ENCODE measurements at regions of chr3 and their contacts with region 1.

Region 1: GRCh38 chr3:72375237-72376076 is 472.8 kb downstream of the SHQ1 start:
- DNase-seq: no peak
- H3K4me3 Mint-ChIP-seq: peak overlapping the region; percentile 32
- H3K27ac Mint-ChIP-seq: peak overlapping the region; percentile 92
- H3K4me1 Mint-ChIP-seq: peaks cover 48% of the 10 kb centered on the region
- H3K27me3 Mint-ChIP-seq: no peaks in the 10 kb centered on the region

Region 2: DNA sequence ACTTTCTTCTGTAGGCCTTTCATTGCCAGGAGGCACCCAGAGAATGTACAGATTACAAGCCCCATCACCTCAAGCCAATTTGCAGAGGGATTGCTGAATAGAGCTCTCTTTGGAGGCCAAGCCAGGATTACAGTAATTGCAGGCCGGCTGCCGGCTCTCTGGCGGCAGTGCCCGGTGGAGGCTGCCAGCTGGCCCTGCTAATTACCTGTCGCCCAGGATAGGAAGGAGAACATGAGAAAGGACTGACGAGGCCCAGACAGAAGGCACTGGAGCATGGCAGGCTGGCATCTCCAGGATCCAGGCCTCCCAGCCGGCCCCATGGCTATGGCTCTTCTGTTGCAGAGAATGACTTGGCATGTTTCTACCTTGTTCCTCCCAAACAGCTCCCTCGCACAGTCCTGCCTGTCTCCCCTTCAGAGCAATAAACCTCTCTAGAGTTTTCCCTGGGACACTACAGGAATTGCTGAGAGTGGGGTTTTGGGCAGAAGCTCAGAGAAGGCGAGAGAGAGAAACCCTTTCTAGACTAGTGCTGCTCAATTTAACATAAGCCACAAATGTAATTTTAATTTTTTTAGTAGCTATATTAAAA is 316.9 kb before region 1 on chr3:
- intact Hi-C with region 1: no loop called
- DNase-seq: no peak
- H3K4me3 Mint-ChIP-seq: no peak overlapping the region
- H3K27ac Mint-ChIP-seq: no peak overlapping the region
- H3K4me1 Mint-ChIP-seq: peaks cover 17% of the 10 kb centered on the region
- H3K27me3 Mint-ChIP-seq: no peaks in the 10 kb centered on the region

Region 3: DNA sequence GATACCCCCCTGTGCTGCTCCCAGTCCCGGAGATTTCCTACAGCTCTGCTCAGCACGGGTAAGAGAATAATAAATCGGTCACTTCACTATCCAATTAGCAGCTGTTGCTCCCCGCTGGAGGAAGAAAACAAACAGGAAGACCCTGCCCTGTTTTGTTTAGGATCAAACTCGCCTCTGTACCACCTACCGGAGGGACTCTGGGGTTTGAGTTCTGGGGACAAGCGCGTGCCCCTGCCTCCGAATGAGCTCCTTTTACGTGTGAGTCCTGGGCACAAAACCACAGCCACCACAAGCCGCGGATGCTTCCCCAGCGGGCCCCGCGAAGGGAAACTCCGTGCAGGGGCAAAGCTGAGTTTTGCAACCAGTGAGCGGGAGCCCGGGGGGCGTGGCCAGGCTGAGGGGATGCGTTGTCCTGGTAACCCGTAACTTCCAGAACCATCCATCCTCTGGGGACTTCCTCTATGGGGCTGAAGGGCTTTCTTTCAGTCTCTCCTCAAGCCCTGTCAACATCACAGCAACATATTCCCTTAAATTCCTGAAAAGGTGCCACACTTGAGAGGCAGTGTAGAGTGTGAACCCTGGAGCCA is 274.8 kb before region 1 on chr3:
- intact Hi-C with region 1: loop called (anchors 1 kb)
- DNase-seq: peak; percentile 95
- H3K4me3 Mint-ChIP-seq: peak overlapping the region; percentile 78
- H3K27ac Mint-ChIP-seq: peak overlapping the region; percentile 88
- H3K4me1 Mint-ChIP-seq: peaks cover 32% of the 10 kb centered on the region
- H3K27me3 Mint-ChIP-seq: peaks cover 5% of the 10 kb centered on the region

Region 4: GRCh38 chr3:72413228-72413627 is 37.8 kb after region 1 on chr3:
- intact Hi-C with region 1: loop called (anchors 1 kb)
- DNase-seq: no peak
- H3K4me3 Mint-ChIP-seq: no peak overlapping the region
- H3K27ac Mint-ChIP-seq: peak overlapping the region; percentile 52
- H3K4me1 Mint-ChIP-seq: peaks cover 76% of the 10 kb centered on the region
- H3K27me3 Mint-ChIP-seq: no peaks in the 10 kb centered on the region

Region 5: DNA sequence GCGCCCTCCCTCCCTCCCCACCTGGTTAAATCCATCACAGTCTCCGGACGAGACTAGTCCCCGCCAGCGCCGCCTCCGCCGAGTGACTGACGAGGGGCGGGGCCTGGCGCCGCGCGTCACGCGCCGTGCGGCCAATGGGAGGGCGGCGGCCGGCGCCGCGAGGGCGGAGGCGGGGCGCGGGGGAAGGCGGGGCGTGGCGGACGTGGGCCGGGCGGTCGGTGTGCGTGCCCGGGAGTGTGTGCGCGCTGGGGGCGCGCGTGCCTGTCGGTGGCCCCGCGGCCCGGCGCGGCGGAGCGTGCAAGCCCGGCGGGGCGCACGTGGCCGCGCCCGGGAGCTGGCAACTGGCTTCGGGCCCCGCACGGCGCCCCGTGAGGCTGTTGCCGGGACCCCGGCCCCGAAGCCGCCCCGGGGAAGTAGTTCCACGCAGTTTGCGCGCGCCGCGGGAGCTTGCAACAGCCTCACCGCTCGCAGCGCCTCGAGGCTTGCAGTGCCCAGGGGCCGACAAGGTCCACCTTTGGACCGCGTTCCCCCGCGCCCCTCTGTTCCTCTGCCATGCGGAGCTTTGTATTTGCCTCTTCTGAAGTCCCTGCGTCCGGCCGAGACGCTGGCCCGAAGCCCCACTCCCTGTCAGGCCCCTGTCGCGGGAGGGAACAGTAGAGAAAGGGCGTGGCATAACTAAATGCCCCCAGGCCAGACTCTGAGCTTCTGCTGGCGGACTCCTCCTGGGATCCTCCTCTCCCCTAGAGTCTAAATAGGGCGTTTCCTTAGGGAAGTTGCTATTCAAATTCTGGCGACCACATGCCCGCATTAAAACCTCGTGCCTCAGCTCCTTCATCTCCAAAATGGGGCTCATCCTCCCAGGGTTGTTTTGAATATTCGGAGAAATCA is 71.8 kb after region 1 on chr3:
- intact Hi-C with region 1: loop called (anchors 1 kb)
- DNase-seq: peak; percentile 93
- H3K4me3 Mint-ChIP-seq: peak overlapping the region; percentile 71
- H3K27ac Mint-ChIP-seq: peak overlapping the region; percentile 80
- H3K4me1 Mint-ChIP-seq: peaks cover 50% of the 10 kb centered on the region
- H3K27me3 Mint-ChIP-seq: peaks cover 1% of the 10 kb centered on the region

Region 6: DNA sequence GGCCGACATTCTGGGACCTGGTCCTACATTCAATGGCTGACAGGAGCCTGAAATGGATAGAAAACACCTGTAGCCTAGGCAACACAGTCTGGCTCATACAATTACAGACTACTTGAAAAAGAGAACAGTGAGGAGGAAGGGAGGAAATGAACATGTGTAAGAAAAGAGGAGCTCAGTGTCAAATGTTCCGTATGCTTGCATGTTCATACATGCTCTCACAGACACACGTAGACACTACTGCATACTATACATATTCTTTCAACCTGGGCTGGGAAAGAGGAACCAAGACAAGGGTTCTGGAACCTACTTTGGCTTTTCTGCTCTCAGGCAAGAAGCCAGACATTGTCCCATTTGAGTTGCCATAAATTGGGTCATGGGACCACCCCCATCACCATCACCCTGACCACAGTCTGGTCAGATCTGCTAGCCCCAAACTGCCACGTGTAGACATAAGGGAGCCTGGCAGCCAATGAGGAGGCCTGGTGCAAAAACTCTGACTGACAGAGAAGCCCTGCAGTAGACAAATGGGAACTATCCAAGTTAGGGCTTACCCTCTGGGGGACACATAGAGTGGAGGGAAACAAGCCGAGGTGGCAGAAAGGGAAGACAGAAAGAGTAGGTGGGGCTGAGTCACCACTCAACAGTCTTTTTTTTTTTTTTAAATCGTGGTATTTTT is 162.8 kb after region 1 on chr3:
- intact Hi-C with region 1: loop called (anchors 5 kb)
- DNase-seq: no peak
- H3K4me3 Mint-ChIP-seq: no peak overlapping the region
- H3K27ac Mint-ChIP-seq: peak overlapping the region; percentile 36
- H3K4me1 Mint-ChIP-seq: peaks cover 45% of the 10 kb centered on the region
- H3K27me3 Mint-ChIP-seq: peaks cover 3% of the 10 kb centered on the region